Heart left ventricle (tissue), 16 donors: ENCODE measurements at regions of chr17 and their contacts with region 1.

Region 1: DNA sequence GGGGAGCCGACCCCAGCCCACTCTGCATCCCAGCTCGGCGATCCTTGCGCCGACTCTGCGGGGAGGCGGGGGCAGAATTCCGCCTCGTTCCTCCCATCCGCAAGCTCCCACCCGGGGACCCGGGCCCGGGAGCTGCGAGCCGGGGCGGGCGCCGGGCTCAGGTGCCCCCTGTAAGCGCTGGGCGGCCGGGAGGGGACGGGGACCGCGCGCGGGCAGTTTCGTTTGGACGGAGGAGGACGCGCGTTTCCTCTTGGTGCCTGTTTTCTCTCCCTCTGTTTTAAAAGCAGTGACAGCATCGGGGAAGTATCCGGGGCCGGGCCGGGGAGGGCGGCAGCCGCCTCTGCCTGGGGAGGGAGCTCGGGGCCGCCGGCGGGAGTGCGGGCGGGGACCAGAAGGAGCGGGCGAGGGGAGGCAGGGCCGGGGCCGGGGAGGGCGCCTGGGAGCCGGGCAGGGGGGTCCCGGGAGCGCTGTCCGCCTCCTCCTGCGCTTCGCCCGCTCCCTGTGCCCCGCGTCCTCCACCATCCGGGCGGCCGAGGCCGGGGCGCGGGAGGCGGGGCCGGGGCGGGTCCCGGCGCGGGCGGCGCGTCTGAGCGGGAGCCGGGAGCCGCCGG is 57.0 kb downstream of the RAP1GAP2 start:
- DNase-seq: peak; percentile 71 to 83 (median 73)
- ATAC-seq: peak; percentile 34 to 70 (median 62)
- H3K4me3 ChIP-seq: peak overlapping the region; percentile 36 to 78 (median 64)
- H3K27ac ChIP-seq: peak overlapping the region; percentile 53 to 91 (median 84)
- H3K4me1 ChIP-seq: peaks cover 0 to 50% (median 24%) of the 10 kb centered on the region in 12 donors
- H3K27me3 ChIP-seq: peaks cover 0 to 6% (median 0%) of the 10 kb centered on the region in 9 donors
- CTCF ChIP-seq: peak in 2 of 12 donors; percentile 2 to 8
- POLR2A ChIP-seq: no peak

Region 2: DNA sequence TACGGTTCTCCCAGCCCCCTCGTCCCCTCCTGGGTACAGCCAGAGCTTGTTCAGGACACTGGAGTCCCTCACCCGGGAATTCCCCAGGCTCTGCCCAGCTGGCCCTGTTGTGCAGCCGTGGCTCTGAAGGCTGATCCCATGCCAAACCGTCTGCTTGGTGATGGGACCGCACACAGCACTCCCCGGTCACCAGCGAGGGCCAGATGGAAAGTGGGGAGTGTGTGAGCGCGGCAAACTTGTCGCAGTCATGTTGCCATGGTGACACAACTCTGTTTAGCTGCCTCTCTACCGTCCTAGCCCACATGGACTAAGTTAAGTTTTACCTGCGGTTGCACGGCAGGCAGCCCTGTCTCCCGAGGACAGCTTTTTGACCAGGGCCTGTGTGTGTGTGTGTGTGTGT is 50.9 kb after region 1 on chr17:
- intact Hi-C with region 1: loop called in 3 of 10 experiments (anchors 2 to 5 kb)
- DNase-seq: peak; percentile 70 to 89 (median 77)
- ATAC-seq: peak; percentile 72 to 87 (median 78)
- H3K4me3 ChIP-seq: no peak overlapping the region
- H3K27ac ChIP-seq: peak overlapping the region in 5 of 12 donors; percentile 25 to 88 (median 66)
- H3K4me1 ChIP-seq: peaks cover 0 to 63% (median 14%) of the 10 kb centered on the region in 12 donors
- H3K27me3 ChIP-seq: no peaks in the 10 kb centered on the region
- CTCF ChIP-seq: no peak
- POLR2A ChIP-seq: no peak

Region 3: DNA sequence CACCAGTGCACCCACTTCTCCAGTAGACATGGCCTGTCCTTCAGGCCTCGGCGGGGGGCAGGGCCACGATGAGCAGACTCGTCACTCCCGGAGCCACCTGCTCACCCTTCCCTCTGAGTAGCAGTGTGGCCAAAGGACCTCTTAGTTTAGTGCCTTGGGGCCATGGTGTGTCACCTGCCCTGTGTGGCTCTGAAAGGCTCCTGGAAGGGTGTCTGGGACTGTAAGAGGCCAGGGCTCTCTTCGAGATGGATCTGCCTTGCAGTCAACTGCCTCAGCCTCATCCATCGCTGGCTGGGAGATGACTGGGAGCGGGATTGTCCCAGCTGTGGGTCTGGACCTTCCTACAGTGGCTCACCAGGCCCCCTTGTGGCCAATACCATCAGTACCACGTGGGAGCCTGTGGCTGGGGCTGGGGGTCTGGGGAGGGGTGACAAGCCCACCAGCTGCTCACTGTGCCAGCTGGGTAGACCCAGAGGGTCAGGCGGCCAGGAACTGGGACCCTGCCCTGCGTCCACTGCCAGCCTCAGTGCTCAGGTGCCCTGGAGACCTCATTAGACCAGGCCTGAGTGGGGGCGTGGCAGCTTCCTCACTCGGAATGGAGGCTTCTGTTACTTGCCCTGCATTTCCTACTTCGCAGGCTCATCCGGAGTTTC is 76.8 kb after region 1 on chr17:
- intact Hi-C with region 1: loop called in 9 of 10 experiments (anchors 2 to 10 kb)
- DNase-seq: peak in 1 of 5 donors; percentile 39
- ATAC-seq: peak; percentile 56 to 79 (median 70)
- H3K4me3 ChIP-seq: no peak overlapping the region
- H3K27ac ChIP-seq: no peak overlapping the region
- H3K4me1 ChIP-seq: no peaks in the 10 kb centered on the region
- H3K27me3 ChIP-seq: no peaks in the 10 kb centered on the region
- CTCF ChIP-seq: peak; percentile 47 to 70 (median 60)
- POLR2A ChIP-seq: no peak

Region 4: GRCh38 chr17:3004133-3004801 is 151.1 kb after region 1 on chr17:
- intact Hi-C with region 1: loop called in 3 of 10 experiments (anchors 2 to 10 kb)
- DNase-seq: peak; percentile 98 to 99 (median 99)
- ATAC-seq: peak; percentile 93 to 96 (median 94)
- H3K4me3 ChIP-seq: peak overlapping the region in 9 of 12 donors; percentile 6 to 38 (median 27)
- H3K27ac ChIP-seq: peak overlapping the region; percentile 59 to 91 (median 84)
- H3K4me1 ChIP-seq: peaks cover 0 to 39% (median 29%) of the 10 kb centered on the region in 12 donors
- H3K27me3 ChIP-seq: no peaks in the 10 kb centered on the region
- CTCF ChIP-seq: no peak
- POLR2A ChIP-seq: peak in 1 of 2 donors; percentile 18

Region 5: GRCh38 chr17:3026856-3027751 is 173.9 kb after region 1 on chr17:
- intact Hi-C with region 1: loop called in 1 of 10 experiments (anchors 5 kb)
- DNase-seq: peak in 1 of 5 donors; percentile 15
- ATAC-seq: peak in 1 of 4 donors; percentile 2
- H3K4me3 ChIP-seq: no peak overlapping the region
- H3K27ac ChIP-seq: peak overlapping the region in 1 of 12 donors; percentile 3
- H3K4me1 ChIP-seq: peaks cover 0 to 29% (median 16%) of the 10 kb centered on the region in 12 donors
- H3K27me3 ChIP-seq: no peaks in the 10 kb centered on the region
- CTCF ChIP-seq: no peak
- POLR2A ChIP-seq: no peak